Activated CD8-positive, alpha-beta memory T cell treated with anti-CD3 and anti-CD28 coated beads, Interleukin-2, amount 10 ng/mL, durations not matched to agents 7 days and 5 days (primary cell): ENCODE measurements at regions of chr12 and their contacts with region 1.

Region 1: GRCh38 chr12:52069327-52070184 is at the start of gene ATG101:
- DNase-seq: peak; percentile 93
- ATAC-seq: peak; percentile 93
- H3K4me3 Mint-ChIP-seq: peak within 1 kb of the TSS; percentile 95
- H3K27ac Mint-ChIP-seq: peak within 1 kb of the TSS; percentile 98
- H3K4me1 Mint-ChIP-seq: peaks cover 62% of the 10 kb centered on the region
- H3K27me3 Mint-ChIP-seq: no peaks in the 10 kb centered on the region
- total RNA-seq, gene ATG101: 33.3 to 42.2 TPM

Region 2: DNA sequence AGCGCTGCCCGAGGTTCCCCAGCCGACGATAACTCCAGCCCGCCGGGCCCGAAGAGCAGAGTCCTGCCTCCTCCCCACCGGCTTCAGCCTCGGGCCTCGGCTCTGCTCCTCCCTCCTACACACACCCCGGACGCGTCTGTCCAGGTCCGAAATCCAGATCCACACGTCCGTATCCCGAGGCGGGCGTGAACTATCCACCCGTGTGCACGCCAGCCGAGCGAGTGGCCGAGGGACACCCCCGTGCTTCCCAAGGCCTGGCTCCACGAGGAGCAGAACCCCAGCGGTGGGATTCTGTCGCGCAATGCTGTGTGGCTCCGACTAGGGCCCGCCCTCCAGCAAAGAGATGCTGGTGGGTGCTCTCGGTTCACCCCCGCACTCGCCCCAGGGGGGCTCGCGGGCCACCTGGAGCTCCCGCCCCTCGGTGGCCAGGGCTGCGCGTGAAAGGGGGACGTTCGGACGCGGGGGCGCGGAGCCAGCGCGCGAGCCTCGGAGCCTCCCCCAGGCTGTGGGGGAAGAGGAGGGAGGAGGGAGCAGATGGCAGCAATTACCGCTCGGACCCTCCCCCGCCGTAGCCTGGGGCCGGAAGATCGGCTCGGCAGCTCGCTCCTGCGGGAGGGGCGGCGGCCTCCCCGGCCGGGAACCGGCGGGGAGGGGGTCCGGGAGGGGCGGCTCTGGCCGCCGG is 200.6 kb before region 1 on chr12:
- CTCF ChIA-PET with region 1: no interaction called
- DNase-seq: no peak
- ATAC-seq: no peak
- H3K4me3 Mint-ChIP-seq: no peak overlapping the region
- H3K27ac Mint-ChIP-seq: no peak overlapping the region
- H3K4me1 Mint-ChIP-seq: peaks cover 3% of the 10 kb centered on the region
- H3K27me3 Mint-ChIP-seq: peaks cover 64% of the 10 kb centered on the region

Region 3: DNA sequence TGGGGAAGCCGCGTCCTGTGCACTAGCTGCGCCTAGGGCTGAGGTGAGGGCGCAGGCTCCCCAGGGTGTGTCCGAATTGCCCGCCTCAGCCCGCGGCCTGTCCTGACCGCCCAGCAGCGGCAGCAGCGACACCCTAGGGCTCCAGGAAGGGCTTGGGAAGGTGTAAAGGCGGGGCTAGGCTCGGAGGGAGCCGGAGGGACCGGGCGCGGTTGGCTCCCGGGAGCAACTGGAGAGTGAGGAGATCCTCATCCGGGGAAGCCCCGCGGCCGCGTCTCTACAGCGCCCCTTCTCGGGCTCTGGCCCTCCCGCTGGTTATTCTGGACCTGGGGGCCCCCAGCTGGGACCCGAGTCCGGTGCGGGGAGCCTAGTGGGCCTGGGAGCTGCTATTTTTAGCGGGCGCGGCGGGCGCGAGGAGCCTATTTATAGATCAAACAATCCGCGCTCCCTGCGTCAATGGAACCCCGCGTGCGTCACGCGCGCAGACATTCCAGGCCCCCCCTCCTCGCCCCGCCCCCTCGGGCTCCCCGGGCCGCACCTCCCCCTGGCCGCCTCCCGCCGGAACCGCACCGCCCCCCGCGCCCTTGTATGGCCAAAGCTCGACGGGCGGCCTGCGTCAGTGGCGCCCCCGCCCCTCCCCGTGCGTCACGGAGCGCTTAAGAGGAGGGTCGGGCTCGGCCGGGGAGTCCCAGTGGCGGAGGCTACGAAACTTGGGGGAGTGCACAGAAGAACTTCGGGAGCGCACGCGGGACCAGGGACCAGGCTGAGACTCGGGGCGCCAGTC is 18.6 kb before region 1 on chr12 and contains the start of gene NR4A1:
- CTCF ChIA-PET with region 1: interaction called, 29 read pairs
- DNase-seq: peak; percentile 97
- ATAC-seq: peak; percentile 85
- H3K4me3 Mint-ChIP-seq: peak within 1 kb of the TSS; percentile 79
- H3K27ac Mint-ChIP-seq: peak within 1 kb of the TSS; percentile 87
- H3K4me1 Mint-ChIP-seq: peaks cover 41% of the 10 kb centered on the region
- H3K27me3 Mint-ChIP-seq: peaks cover 6% of the 10 kb centered on the region
- total RNA-seq, gene NR4A1: 8.4 to 41.8 TPM

Region 4: DNA sequence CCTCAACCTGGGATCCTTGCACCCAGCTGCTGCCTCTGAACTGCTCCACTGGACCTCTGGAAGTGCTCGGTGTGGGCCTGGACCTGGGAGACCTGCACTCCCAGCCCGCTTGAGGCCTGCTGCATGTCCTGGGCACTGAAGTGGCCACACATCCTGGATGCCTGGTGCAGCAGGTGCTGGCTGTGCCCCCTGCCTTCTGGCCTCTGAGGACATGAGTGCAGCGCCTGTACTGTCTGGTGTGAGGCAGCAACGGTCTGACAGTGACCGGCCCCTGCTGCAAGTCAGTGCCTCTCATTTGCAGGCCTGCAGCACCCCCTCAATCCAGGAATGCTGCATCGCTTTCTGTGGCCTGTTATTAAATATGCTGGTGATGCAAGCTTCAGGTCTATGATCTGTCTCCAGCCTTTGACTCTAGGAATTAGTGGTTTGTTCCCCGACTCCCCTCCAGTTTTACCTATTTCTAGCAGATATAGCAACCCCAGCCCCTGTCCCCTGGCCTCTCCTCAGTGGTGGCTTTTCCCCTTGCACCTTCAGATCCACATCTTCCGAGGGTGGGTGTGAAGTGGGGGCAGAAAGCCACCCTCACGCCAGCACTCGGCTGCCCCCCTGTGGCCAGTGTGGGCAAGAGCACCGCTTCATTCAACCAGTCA is 13.6 kb after region 1 on chr12:
- CTCF ChIA-PET with region 1: interaction called, 78 read pairs
- DNase-seq: peak; percentile 75
- ATAC-seq: peak; percentile 78
- H3K4me3 Mint-ChIP-seq: no peak overlapping the region
- H3K27ac Mint-ChIP-seq: no peak overlapping the region
- H3K4me1 Mint-ChIP-seq: peaks cover 4% of the 10 kb centered on the region
- H3K27me3 Mint-ChIP-seq: peaks cover 15% of the 10 kb centered on the region

Region 5: DNA sequence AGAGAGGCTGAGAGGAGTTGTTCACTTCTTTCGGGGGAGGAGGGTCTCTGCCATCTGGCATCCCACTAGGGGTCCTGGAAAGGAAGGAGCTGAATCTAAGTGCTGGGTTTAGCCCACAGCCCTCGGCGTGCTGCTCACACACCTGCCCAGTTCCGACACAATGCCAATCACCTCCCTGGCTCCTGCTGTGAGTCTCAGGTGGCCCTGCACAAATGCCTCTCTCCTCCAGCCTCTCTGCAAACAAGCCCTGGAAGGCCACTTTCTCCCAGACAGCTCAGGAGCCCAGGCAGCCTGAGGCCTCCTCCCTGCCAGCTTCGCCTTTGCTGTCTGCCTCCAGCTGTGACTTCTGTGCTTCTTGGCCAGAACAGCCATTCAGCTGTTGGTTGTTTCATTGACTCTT is 61.2 kb after region 1 on chr12:
- CTCF ChIA-PET with region 1: no interaction called
- DNase-seq: peak; percentile 27
- ATAC-seq: no peak
- H3K4me3 Mint-ChIP-seq: no peak overlapping the region
- H3K27ac Mint-ChIP-seq: no peak overlapping the region
- H3K4me1 Mint-ChIP-seq: no peaks in the 10 kb centered on the region
- H3K27me3 Mint-ChIP-seq: peaks cover 26% of the 10 kb centered on the region

Region 6: GRCh38 chr12:52181746-52182145 is 112.2 kb after region 1 on chr12:
- CTCF ChIA-PET with region 1: no interaction called
- DNase-seq: no peak
- ATAC-seq: no peak
- H3K4me3 Mint-ChIP-seq: no peak overlapping the region
- H3K27ac Mint-ChIP-seq: no peak overlapping the region
- H3K4me1 Mint-ChIP-seq: peaks cover 9% of the 10 kb centered on the region
- H3K27me3 Mint-ChIP-seq: no peaks in the 10 kb centered on the region

Region 7: GRCh38 chr12:52197371-52198231 is 128.0 kb after region 1 on chr12:
- CTCF ChIA-PET with region 1: no interaction called
- DNase-seq: no peak
- ATAC-seq: no peak
- H3K4me3 Mint-ChIP-seq: no peak overlapping the region
- H3K27ac Mint-ChIP-seq: no peak overlapping the region
- H3K4me1 Mint-ChIP-seq: peaks cover 2% of the 10 kb centered on the region
- H3K27me3 Mint-ChIP-seq: peaks cover 9% of the 10 kb centered on the region